ENCODE measurements at regions of chr15 and their contacts with region 1.

Region 1: DNA sequence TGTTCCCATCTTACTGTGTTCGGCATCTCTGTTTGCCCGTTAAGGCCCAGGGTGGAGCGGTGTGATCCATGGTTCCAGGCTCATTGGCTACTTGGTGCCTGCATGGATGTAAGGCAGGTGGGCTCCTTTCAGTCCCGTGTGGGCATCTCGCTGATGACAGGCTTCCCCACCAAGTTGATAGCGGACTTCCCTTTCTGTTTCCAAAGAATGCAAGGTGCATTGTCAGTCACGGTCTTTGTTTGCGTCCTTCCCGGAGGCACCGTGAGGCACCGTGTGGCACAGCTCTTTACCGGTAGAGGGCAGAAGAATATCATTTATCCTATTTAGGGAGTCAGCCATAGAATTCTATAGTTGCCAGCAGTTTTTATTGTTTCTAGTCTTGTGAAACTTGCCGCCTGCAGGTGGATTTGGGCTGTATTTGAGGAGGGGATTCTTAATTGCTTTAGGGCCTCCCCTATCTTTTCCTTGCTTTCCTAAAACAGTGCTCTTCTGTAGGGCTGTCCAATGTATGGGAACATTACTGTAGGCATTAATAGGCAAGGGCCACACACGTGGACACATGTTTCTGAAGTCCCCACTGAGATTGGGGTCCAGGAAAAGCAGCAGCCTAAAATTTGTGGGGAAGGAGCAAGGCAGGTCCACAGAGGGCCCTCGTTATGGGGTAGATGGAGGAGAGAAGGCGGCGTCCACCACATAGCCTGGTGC is 244.1 kb downstream of the SLCO3A1 start:
- DNase-seq: peak; percentile 40 to 53 (median 48)
- ATAC-seq: peak; percentile 78
- H3K4me3 ChIP-seq: no peak overlapping the region
- H3K27ac ChIP-seq: no peak overlapping the region
- H3K4me1 ChIP-seq: peaks cover 3% of the 10 kb centered on the region
- H3K27me3 ChIP-seq: no peaks in the 10 kb centered on the region
- CTCF ChIP-seq: peak; percentile 36 to 85 (median 75)
- POLR2A ChIP-seq: no peak

Region 2: DNA sequence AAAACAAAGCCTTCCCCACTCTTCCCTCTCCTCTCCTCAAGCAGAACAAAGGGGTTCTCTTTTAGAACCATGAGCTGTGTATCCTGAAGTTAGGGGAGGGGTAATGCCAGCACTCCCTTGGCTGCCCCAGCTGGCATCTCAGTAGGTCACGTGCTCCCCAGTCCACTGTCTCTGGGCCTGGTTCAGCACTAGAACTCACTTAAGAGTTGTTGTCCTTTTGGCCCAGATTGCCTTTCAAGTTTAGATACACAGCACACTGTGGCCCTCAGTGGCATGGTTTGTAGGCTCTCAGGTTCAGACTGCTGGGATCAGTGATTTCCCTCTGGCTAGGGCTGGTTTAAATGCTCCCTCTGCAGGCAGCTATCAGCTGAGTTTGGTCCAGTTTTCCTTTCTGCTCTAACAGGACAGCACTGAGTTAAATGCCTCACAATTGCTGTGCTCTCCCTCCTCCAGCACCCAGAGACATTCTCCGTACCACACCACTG is 107.7 kb after region 1 on chr15:
- intact Hi-C with region 1: no loop called
- DNase-seq: no peak
- ATAC-seq: no peak
- H3K4me3 ChIP-seq: no peak overlapping the region
- H3K27ac ChIP-seq: no peak overlapping the region
- H3K4me1 ChIP-seq: no peaks in the 10 kb centered on the region
- H3K27me3 ChIP-seq: no peaks in the 10 kb centered on the region
- CTCF ChIP-seq: no peak
- POLR2A ChIP-seq: no peak

Region 3: GRCh38 chr15:92226014-92226612 is 128.5 kb after region 1 on chr15:
- intact Hi-C with region 1: loop called (anchors 5 kb)
- DNase-seq: peak in 1 of 4 donors; percentile 26
- ATAC-seq: no peak
- H3K4me3 ChIP-seq: no peak overlapping the region
- H3K27ac ChIP-seq: no peak overlapping the region
- H3K4me1 ChIP-seq: no peaks in the 10 kb centered on the region
- H3K27me3 ChIP-seq: no peaks in the 10 kb centered on the region
- CTCF ChIP-seq: peak in 6 of 7 experiments; percentile 30 to 56 (median 40)
- POLR2A ChIP-seq: no peak

Region 4: DNA sequence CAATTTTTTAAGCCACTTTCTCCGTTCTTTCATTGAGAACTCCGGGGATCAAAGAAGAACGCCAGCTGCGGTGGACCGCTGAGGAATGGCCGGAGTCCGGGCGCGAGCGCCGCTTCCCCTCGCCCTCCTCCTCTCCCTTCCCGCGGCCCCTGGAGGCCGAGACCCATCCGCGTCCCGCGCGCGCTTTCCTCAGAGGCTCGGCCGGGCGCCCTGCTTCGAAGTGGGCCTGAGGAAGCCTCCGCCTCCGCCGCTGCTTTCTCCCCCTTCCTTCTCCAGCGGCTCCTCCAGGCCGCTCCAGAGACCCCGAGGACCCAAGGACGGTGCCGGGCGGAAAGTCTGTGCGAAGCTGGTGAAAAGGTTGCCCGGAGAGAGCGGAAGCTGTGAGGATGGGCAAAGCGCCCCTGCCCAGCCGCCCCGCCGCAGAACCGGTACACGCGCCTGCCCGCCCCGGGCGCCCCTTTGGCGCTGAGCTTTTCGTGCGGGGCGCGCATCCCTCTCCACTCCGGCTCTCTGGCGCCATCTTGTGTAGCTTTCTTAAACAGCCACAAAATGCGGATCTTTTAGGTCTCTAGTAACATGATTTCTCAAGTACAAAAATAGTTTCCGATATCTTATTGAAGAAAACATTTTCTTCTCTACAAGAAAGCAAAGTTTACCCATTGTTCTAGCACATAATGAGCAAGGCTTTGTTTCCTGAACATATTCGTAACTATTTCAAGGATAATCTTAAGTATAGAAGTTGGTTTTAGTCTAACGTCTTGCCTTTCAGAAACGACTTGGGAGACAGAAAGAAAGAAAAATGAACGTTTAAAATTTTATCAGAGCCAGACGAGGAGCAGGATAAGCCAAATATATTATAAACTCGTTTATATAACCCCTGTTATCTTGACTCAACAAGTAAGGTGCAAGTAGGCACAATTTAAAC is 617.1 kb after region 1 on chr15:
- intact Hi-C with region 1: loop called (anchors 10 kb)
- DNase-seq: peak; percentile 63 to 79 (median 74)
- ATAC-seq: peak; percentile 87
- H3K4me3 ChIP-seq: peak overlapping the region; percentile 2 to 23
- H3K27ac ChIP-seq: peak overlapping the region in 2 of 4 donors; percentile 38 to 45
- H3K4me1 ChIP-seq: no peaks in the 10 kb centered on the region
- H3K27me3 ChIP-seq: no peaks in the 10 kb centered on the region
- CTCF ChIP-seq: peak; percentile 77 to 91 (median 84)
- POLR2A ChIP-seq: peak in 1 of 3 donors; percentile 17

Measured in body of pancreas (tissue), 4 donors.